Dendritic cell treated with granulocyte-macrophage colony-stimulating factor and Interleukin-4, amounts not matched to agents 40 ng/mL and 50 ng/mL, for 4 days (primary cell): ENCODE measurements at regions of chr10 and their contacts with region 1.

Region 1: GRCh38 chr10:45557275-45557905 is 115.2 kb downstream of the ZFAND4 start:
- H3K4me3 Mint-ChIP-seq: no peak overlapping the region
- H3K27ac Mint-ChIP-seq: peak overlapping the region; percentile 71
- H3K4me1 Mint-ChIP-seq: peaks cover 57% of the 10 kb centered on the region
- H3K27me3 Mint-ChIP-seq: no peaks in the 10 kb centered on the region

Region 2: GRCh38 chr10:45461034-45461433 is 96.4 kb before region 1 on chr10:
- intact Hi-C with region 1: no loop called
- H3K4me3 Mint-ChIP-seq: peak overlapping the region; percentile 65
- H3K27ac Mint-ChIP-seq: peak overlapping the region; percentile 87
- H3K4me1 Mint-ChIP-seq: peaks cover 75% of the 10 kb centered on the region
- H3K27me3 Mint-ChIP-seq: no peaks in the 10 kb centered on the region

Region 3: GRCh38 chr10:45483002-45483401 is 74.4 kb before region 1 on chr10:
- intact Hi-C with region 1: no loop called
- H3K4me3 Mint-ChIP-seq: no peak overlapping the region
- H3K27ac Mint-ChIP-seq: no peak overlapping the region
- H3K4me1 Mint-ChIP-seq: no peaks in the 10 kb centered on the region
- H3K27me3 Mint-ChIP-seq: no peaks in the 10 kb centered on the region

Region 4: GRCh38 chr10:45569471-45569870 is 12.1 kb after region 1 on chr10:
- intact Hi-C with region 1: no loop called
- H3K4me3 Mint-ChIP-seq: no peak overlapping the region
- H3K27ac Mint-ChIP-seq: no peak overlapping the region
- H3K4me1 Mint-ChIP-seq: peaks cover 4% of the 10 kb centered on the region
- H3K27me3 Mint-ChIP-seq: no peaks in the 10 kb centered on the region

Region 5: GRCh38 chr10:45594276-45595106 is 37.1 kb after region 1 on chr10:
- intact Hi-C with region 1: loop called (anchors 5 kb)
- H3K4me3 Mint-ChIP-seq: peak overlapping the region; percentile 81
- H3K27ac Mint-ChIP-seq: peak overlapping the region; percentile 77
- H3K4me1 Mint-ChIP-seq: peaks cover 43% of the 10 kb centered on the region
- H3K27me3 Mint-ChIP-seq: peaks cover 15% of the 10 kb centered on the region